ENCODE measurements at regions of chr18 and their contacts with region 1.

Region 1: DNA sequence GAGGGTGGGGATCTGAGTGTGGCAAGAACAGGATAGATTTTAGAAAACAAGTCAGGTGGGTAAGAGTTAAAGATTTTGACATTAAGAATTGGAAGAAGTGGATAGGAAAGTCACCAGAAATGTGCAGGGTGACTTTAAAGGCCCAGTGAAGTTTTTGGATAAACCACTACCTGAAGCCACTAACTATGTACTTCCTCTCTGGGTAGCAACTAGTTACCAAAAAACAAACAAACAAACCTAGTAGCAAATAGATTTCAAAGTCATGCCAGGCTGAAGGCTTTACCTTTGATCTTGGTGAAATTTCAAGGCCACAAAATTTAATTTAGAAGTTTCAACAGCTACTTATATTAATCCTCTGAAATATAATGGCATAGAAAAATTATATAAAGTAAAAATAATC is 42.5 kb downstream of the PSMA8 start:
- DNase-seq: no peak
- H3K4me3 Mint-ChIP-seq: no peak overlapping the region
- H3K27ac Mint-ChIP-seq: no peak overlapping the region
- H3K4me1 Mint-ChIP-seq: no peaks in the 10 kb centered on the region
- H3K27me3 Mint-ChIP-seq: no peaks in the 10 kb centered on the region
- CTCF ChIP-seq: no peak

Region 2: DNA sequence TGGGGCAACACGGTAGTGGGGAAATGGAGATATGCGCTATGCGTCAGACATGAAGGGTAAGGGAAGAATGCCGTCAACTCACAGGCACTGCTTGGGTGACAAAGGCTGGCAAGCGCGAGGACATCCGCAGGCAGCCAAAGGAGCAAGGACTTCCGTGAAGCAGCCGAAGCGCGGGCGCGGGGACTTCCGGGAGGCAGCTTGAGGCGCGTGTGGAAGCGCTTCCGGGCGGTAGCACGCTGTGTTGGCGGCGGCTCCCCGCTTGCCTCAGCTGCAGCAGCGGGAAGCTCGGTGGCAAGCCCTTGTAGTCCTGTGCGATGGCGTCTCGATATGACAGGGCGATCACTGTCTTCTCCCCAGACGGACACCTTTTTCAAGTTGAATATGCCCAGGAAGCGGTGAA is 42.5 kb before region 1 on chr18 and contains the start of gene PSMA8:
- CTCF ChIA-PET with region 1: no interaction called
- POLR2A ChIA-PET with region 1: no interaction called
- intact Hi-C with region 1: no loop called
- DNase-seq: no peak
- H3K4me3 Mint-ChIP-seq: no peak within 1 kb of the TSS
- H3K27ac Mint-ChIP-seq: no peak within 1 kb of the TSS
- H3K4me1 Mint-ChIP-seq: no peaks in the 10 kb centered on the region
- H3K27me3 Mint-ChIP-seq: no peaks in the 10 kb centered on the region
- CTCF ChIP-seq: no peak
- total RNA-seq, gene PSMA8: not detected in 2 replicates

Region 3: DNA sequence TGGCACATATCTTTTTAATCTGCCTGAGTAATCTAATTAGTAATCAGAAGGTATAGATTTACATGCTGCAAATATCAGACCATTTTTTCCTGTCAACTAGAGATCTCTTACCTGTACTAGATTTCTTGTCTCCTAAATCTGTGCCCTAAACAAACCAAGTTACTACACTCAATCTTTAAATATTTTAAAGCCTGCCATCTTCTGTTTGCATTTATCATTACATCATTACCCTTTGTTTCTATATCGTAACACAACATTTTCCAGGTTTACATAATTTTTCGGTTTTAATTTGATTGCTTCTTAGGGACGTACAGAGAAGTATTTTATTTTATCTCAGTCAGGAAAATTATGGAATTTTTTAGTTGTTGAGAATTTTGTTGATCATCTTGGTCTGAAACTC is 16.8 kb before region 1 on chr18:
- CTCF ChIA-PET with region 1: interaction called, 19 read pairs
- POLR2A ChIA-PET with region 1: no interaction called
- intact Hi-C with region 1: no loop called
- DNase-seq: peak; percentile 11
- H3K4me3 Mint-ChIP-seq: no peak overlapping the region
- H3K27ac Mint-ChIP-seq: no peak overlapping the region
- H3K4me1 Mint-ChIP-seq: no peaks in the 10 kb centered on the region
- H3K27me3 Mint-ChIP-seq: no peaks in the 10 kb centered on the region
- CTCF ChIP-seq: peak; percentile 33

Region 4: DNA sequence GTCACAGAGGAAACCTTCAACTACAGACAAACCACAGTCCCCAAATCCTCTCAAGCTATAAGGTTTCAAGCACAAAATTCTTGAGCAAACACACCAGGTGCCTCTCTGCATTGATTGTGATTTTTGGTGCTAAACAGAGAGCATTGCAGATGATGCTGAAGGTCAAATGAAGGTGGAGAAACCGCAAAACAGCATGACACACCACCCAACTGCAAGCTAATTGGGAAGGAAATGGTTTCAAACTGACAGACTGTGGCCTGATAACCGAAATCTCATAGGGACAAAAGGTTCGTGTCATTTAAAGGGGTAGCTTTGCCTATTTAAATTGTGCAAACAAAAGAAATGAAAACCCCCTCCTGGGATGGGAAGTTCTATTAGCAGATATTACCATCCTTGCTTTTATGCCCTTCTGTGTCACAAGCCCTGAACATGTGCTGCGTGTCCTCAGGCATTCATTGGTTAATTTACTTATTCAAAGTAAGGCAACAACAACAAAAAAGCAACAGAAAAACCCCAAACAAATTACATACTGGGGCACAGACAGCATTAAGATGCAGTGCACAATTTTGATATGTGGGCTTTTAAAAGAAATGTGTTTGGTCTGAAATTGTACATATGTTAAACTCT is 534.4 kb after region 1 on chr18:
- CTCF ChIA-PET with region 1: no interaction called
- POLR2A ChIA-PET with region 1: no interaction called
- intact Hi-C with region 1: no loop called
- DNase-seq: no peak
- H3K4me3 Mint-ChIP-seq: no peak overlapping the region
- H3K27ac Mint-ChIP-seq: no peak overlapping the region
- H3K4me1 Mint-ChIP-seq: peaks cover 7% of the 10 kb centered on the region
- H3K27me3 Mint-ChIP-seq: no peaks in the 10 kb centered on the region
- CTCF ChIP-seq: no peak